Mammary epithelial cell (primary cell): ENCODE measurements at regions of chr10 and their contacts with region 1.

Region 1: DNA sequence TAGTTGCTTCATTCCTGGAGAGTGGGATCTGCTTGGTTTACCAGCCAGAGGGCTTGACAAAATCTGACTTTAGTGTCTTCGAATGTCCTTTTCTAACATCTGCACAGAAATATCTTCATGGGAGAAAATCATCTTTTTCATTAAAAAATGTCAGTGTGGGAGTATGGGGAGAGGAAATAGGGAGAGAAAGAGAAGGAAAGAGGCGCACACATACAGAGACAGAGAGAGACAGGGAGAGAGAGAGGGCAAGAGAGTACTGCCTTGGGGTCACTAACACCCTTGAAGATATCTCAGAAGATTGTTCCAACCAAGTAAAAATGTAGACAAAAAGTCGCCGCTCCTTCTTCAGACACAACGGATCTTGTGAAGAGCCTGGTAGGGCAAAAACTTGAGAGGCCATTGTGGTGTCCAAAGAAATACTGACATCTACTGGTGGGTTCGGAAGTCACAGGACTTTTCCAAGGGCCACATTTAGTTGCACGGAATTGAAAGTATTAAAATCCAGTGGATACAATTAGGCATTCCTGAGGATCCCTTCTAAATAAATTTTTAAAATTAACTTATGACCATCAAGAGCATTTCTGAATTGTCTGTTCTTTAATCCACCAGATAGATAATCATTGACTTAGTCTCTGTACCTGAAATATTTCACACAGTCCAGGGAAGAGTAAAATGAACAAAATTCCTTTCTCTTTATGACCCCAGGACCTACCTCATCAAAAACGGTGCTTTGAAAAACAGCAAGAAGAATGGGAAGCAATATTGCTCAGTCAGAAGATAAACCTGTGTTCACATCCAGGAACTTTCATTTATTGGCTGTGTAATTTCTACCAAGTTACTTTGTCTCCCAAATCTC is 29.7 kb downstream of the VIM start:
- DNase-seq: peak; percentile 58
- H3K4me3 ChIP-seq: no peak overlapping the region
- H3K27ac ChIP-seq: no peak overlapping the region
- H3K4me1 ChIP-seq: no peaks in the 10 kb centered on the region
- H3K27me3 ChIP-seq: no peaks in the 10 kb centered on the region
- CTCF ChIP-seq: peak; percentile 83 to 86

Region 2: DNA sequence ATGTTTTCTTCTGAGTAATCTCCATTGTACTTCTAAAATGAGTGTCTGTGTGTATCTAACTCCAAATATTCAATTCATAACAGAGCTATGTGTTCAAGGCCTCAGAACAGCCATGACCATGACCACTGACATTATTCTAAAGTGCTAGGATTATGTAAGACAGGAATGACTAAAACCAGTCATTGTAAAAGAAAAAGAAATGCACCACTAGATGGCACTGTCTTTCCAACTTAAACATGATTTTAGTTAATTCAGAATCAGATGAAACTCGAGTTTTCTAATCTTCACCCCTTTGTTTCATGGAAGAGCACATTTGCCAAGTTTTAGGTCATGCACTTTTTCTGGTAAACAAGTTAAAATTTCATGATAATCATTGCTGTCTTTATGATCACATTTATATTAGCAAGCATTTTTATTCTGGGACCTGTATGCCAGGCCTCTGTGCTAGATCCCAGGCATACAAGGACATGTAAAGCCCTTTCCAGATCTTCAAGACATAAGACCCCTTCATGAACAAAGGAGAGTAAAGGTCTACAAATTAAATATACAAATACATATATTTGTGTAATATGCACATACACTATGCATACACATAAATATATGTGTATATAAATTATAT is 414.3 kb before region 1 on chr10:
- CTCF ChIA-PET with region 1: no interaction called
- dilution Hi-C with region 1: no loop called
- in situ Hi-C with region 1: loop called in 1 of 2 experiments (anchors 5 kb)
- intact Hi-C with region 1: loop called (anchors 1 kb)
- DNase-seq: peak; percentile 61
- H3K4me3 ChIP-seq: no peak overlapping the region
- H3K27ac ChIP-seq: no peak overlapping the region
- H3K4me1 ChIP-seq: peaks cover 2% of the 10 kb centered on the region
- H3K27me3 ChIP-seq: no peaks in the 10 kb centered on the region
- CTCF ChIP-seq: peak; percentile 38 to 43

Region 3: DNA sequence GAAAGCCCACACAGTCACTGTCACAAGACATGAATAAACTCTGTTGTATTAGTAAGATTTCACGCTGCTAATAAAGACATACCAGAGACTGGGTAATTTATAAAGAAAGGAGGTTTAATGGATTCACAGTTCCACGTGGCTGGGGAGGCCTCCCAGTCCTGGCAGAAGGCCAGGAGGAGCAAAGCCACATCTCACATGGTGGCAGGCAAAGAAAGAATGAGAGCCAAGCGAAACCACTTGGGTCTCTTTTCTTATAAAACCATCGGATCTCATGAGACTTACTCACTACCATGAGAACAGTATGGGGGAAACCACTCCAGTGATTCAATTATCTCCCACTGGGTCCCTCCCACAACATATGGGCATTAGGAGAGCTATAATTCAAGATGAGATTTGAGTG is 86.5 kb after region 1 on chr10:
- CTCF ChIA-PET with region 1: no interaction called
- dilution Hi-C with region 1: no loop called
- in situ Hi-C with region 1: no loop called
- intact Hi-C with region 1: no loop called
- DNase-seq: no peak
- H3K4me3 ChIP-seq: no peak overlapping the region
- H3K27ac ChIP-seq: no peak overlapping the region
- H3K4me1 ChIP-seq: peaks cover 9% of the 10 kb centered on the region
- H3K27me3 ChIP-seq: no peaks in the 10 kb centered on the region
- CTCF ChIP-seq: no peak